Panc1 (cell line): ENCODE measurements at regions of chr12 and their contacts with region 1.

Region 1: GRCh38 chr12:31267966-31268365 is 58.0 kb downstream of the SINHCAF start:
- DNase-seq: no peak
- ATAC-seq: no peak
- H3K4me3 ChIP-seq: no peak overlapping the region
- H3K27ac ChIP-seq: no peak overlapping the region
- H3K4me1 ChIP-seq: no peaks in the 10 kb centered on the region
- H3K27me3 ChIP-seq: no peaks in the 10 kb centered on the region
- CTCF ChIP-seq: no peak

Region 2: DNA sequence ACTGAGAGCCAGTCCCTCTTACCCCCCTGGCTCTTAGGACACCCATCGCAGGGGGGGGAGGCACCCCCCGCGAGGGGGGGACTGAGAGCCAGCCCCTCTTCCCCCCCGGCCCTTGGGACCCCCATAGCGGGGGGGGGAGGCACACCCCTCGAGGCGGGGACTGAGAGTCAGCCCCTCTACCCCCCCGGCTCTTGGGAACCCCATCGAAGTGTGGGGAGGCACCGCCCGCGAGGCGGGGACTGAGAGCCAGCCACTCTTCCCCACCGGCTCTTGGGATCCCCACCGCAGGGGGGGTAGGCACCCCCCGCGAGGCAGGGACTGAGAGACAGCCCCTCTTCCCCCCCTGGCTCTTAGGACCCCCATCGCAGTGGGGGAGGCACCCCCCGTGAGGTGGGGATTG is 145.5 kb before region 1 on chr12:
- CTCF ChIA-PET with region 1: no interaction called
- POLR2A ChIA-PET with region 1: no interaction called
- in situ Hi-C with region 1: no loop called
- intact Hi-C with region 1: no loop called
- DNase-seq: no peak
- ATAC-seq: no peak
- H3K4me3 ChIP-seq: no peak overlapping the region
- H3K27ac ChIP-seq: no peak overlapping the region
- H3K4me1 ChIP-seq: peaks cover 22% of the 10 kb centered on the region
- H3K27me3 ChIP-seq: no peaks in the 10 kb centered on the region; the same call in 1 of the 2 replicates
- CTCF ChIP-seq: no peak

Region 3: DNA sequence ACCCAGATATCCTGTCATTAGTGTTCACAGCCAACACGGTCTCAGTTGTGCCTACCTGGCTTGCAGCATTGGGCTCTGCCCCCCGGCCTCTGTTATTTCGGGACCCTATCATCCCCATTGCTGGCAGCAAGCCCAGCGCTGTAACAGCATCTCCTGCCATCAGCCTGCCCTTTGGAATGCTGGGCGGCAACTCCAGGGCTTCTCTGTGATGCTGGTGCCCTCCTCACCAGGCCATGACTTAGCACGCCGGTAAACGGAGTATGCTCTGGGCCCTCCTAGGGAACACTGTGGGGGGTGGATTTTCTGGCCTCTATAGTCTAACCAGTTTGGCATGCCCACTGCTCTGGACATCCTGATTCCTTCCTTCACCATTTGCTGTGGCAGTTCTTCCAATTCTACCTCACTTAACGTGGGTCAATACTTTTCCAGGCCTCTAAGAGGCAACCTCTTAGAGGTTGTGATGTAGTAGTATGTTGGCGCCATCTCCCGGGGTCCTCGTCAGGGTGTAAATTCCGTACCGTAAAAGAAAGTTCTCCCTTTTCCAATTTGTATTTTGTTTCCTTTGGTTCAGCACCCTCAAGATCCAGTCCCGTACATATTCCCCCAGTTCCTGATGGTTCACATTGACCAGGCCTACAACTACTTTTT is 22.0 kb before region 1 on chr12:
- CTCF ChIA-PET with region 1: interaction called, 40 read pairs
- POLR2A ChIA-PET with region 1: interaction called, 5 read pairs
- in situ Hi-C with region 1: no loop called
- intact Hi-C with region 1: no loop called
- DNase-seq: no peak
- ATAC-seq: peak; percentile 77
- H3K4me3 ChIP-seq: no peak overlapping the region
- H3K27ac ChIP-seq: no peak overlapping the region
- H3K4me1 ChIP-seq: no peaks in the 10 kb centered on the region
- H3K27me3 ChIP-seq: peaks cover 5% of the 10 kb centered on the region; the same call in 1 of the 2 replicates
- CTCF ChIP-seq: peak; percentile 72

Region 4: DNA sequence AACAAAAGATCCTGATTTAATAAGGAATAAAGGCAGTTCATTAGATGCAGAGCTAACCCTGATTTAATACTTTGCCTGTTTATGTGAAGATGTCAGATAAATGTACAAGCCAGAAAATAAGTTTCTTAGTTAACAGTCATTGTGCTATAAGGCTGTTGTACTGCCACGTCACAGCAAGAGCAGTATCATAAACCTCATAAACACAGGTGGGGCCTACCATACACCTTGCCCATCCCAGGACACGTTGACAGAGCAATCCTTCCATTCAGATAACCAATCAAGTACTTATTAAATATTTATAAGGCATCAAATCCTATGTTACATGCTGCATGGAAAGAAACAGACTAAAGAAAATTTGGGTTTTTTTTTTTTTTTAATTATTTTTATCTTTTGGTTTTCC is 21.5 kb after region 1 on chr12:
- CTCF ChIA-PET with region 1: interaction called, 13 read pairs
- POLR2A ChIA-PET with region 1: no interaction called
- in situ Hi-C with region 1: no loop called
- intact Hi-C with region 1: no loop called
- DNase-seq: no peak
- ATAC-seq: no peak
- H3K4me3 ChIP-seq: no peak overlapping the region
- H3K27ac ChIP-seq: no peak overlapping the region
- H3K4me1 ChIP-seq: no peaks in the 10 kb centered on the region
- H3K27me3 ChIP-seq: no peaks in the 10 kb centered on the region
- CTCF ChIP-seq: no peak

Region 5: GRCh38 chr12:31325877-31326631 is 58.1 kb after region 1 on chr12 and contains the start of gene SINHCAF:
- CTCF ChIA-PET with region 1: interaction called, 10 read pairs
- POLR2A ChIA-PET with region 1: no interaction called
- in situ Hi-C with region 1: no loop called
- intact Hi-C with region 1: no loop called
- DNase-seq: peak; percentile 97
- ATAC-seq: peak; percentile 79
- H3K4me3 ChIP-seq: peak within 1 kb of the TSS; percentile 87 to 93
- H3K27ac ChIP-seq: peak within 1 kb of the TSS; percentile 98
- H3K4me1 ChIP-seq: peaks cover 31% of the 10 kb centered on the region
- H3K27me3 ChIP-seq: peaks cover 13% of the 10 kb centered on the region; the same call in 1 of the 2 replicates
- CTCF ChIP-seq: no peak
- total RNA-seq, gene SINHCAF: 68.8 TPM

Region 6: DNA sequence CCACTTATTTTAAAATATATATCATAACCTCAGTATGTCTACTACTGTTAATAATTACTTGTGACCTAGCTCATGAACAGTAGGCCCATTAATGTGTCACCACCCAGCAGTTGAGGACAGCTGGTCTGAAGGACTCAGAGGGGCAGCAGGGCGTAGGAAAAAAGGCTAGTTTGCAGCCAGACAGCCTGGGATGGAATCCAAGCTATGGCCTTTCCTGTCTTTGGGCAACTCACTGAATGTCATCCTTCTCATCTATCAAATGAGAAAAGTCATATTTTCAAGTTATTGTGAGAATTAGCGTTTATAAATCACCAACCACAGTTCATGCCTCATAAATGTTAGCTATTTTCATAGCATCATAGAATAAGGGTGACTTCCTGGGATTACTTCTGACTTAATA is 310.7 kb after region 1 on chr12:
- CTCF ChIA-PET with region 1: interaction called, 11 read pairs
- POLR2A ChIA-PET with region 1: no interaction called
- in situ Hi-C with region 1: no loop called
- intact Hi-C with region 1: no loop called
- DNase-seq: no peak
- ATAC-seq: no peak
- H3K4me3 ChIP-seq: no peak overlapping the region
- H3K27ac ChIP-seq: no peak overlapping the region
- H3K4me1 ChIP-seq: no peaks in the 10 kb centered on the region; the same call in 1 of the 2 replicates
- H3K27me3 ChIP-seq: no peaks in the 10 kb centered on the region
- CTCF ChIP-seq: no peak